ENCODE measurements at regions of chr15 and their contacts with region 1.

Region 1: GRCh38 chr15:68820295-68821189 is at the start of gene ANP32A:
- DNase-seq: peak; percentile 98
- ATAC-seq: peak; percentile 71
- H3K4me3 ChIP-seq: peak within 1 kb of the TSS; percentile 71 to 98 (median 94)
- H3K4me3 Mint-ChIP-seq: peak within 1 kb of the TSS; percentile 96
- H3K27ac ChIP-seq: peak within 1 kb of the TSS; percentile 90 to 93
- H3K27ac Mint-ChIP-seq: peak within 1 kb of the TSS; percentile 98
- H3K4me1 ChIP-seq: peaks cover 21 to 22% of the 10 kb centered on the region in 2 donors
- H3K4me1 Mint-ChIP-seq: peaks cover 27% of the 10 kb centered on the region
- H3K27me3 ChIP-seq: no peaks in the 10 kb centered on the region
- H3K27me3 Mint-ChIP-seq: no peaks in the 10 kb centered on the region
- CTCF ChIP-seq: no peak
- total RNA-seq, gene ANP32A: 153 and 163 TPM in 2 replicates

Region 2: GRCh38 chr15:68277603-68278344 is 542.8 kb before region 1 on chr15 and contains the start of gene FEM1B:
- CTCF ChIA-PET with region 1: no interaction called
- POLR2A ChIA-PET with region 1: interaction called, 5 read pairs
- intact Hi-C with region 1: loop called (anchors 5 kb)
- DNase-seq: peak; percentile 97
- ATAC-seq: peak; percentile 79
- H3K4me3 ChIP-seq: peak within 1 kb of the TSS; percentile 77 to 89 (median 79)
- H3K4me3 Mint-ChIP-seq: peak within 1 kb of the TSS; percentile 98
- H3K27ac ChIP-seq: peak within 1 kb of the TSS; percentile 96
- H3K27ac Mint-ChIP-seq: peak within 1 kb of the TSS; percentile 98
- H3K4me1 ChIP-seq: peaks cover 40% of the 10 kb centered on the region in 2 donors
- H3K4me1 Mint-ChIP-seq: peaks cover 57% of the 10 kb centered on the region
- H3K27me3 ChIP-seq: no peaks in the 10 kb centered on the region
- H3K27me3 Mint-ChIP-seq: no peaks in the 10 kb centered on the region
- CTCF ChIP-seq: no peak
- total RNA-seq, gene FEM1B: 52.4 and 54.4 TPM in 2 replicates

Region 3: GRCh38 chr15:68783226-68784058 is 37.1 kb before region 1 on chr15:
- CTCF ChIA-PET with region 1: interaction called, 14 read pairs
- POLR2A ChIA-PET with region 1: interaction called, 5 read pairs
- intact Hi-C with region 1: loop called (anchors 2 kb)
- DNase-seq: peak; percentile 74
- ATAC-seq: peak; percentile 84
- H3K4me3 ChIP-seq: no peak overlapping the region
- H3K4me3 Mint-ChIP-seq: no peak overlapping the region
- H3K27ac ChIP-seq: peak overlapping the region in 1 of 2 donors; percentile 10
- H3K27ac Mint-ChIP-seq: peak overlapping the region; percentile 50
- H3K4me1 ChIP-seq: peaks cover 30 to 32% of the 10 kb centered on the region in 2 donors
- H3K4me1 Mint-ChIP-seq: peaks cover 32% of the 10 kb centered on the region
- H3K27me3 ChIP-seq: no peaks in the 10 kb centered on the region
- H3K27me3 Mint-ChIP-seq: no peaks in the 10 kb centered on the region
- CTCF ChIP-seq: peak; percentile 82

Region 4: DNA sequence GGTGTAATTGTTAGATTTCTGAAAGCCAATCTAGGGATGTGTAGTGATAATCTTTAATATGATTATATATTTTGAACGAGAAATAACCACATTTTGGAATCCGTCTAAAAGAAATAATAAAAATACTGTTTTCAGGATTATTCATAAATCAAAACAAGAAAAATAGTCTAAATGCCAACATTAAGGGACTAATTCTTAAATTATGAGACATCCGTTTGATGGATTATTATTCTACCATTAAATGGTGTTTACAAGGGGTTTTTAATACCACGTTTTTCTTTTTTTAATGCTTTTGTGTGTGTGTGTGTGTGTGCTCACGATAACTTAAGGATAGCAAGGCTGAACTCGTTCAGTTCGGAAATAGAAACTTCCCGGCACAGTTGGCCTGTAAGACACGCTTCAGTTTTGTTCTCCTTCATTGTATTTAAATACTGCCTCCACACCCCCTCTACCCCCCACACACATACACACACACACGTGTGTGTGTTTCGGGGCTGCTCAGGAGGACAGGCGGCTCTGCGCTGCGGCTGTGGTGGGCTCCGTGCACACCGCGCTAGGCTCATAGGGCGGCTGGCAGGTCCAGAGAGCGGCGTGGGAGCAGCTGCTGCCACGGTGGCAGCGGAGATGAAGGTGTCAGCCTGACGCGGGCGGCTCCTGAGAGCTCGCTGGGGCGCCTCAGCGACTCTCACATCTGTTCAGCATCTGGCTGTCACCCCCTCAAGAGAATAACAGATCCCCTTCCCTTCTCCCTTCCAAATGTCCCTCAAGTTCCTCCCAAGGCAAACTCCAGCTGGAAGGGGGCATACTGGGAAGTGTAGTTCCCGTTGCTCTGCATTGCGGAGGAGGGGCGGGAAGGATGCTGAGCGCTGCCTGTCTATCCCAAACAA is 23.1 kb after region 1 on chr15:
- CTCF ChIA-PET with region 1: no interaction called
- POLR2A ChIA-PET with region 1: interaction called, 8 read pairs
- intact Hi-C with region 1: loop called (anchors 2 kb)
- DNase-seq: peak; percentile 62
- ATAC-seq: peak; percentile 56
- H3K4me3 ChIP-seq: peak overlapping the region in 4 of 5 experiments; percentile 9 to 52 (median 40)
- H3K4me3 Mint-ChIP-seq: peak overlapping the region; percentile 80
- H3K27ac ChIP-seq: no peak overlapping the region
- H3K27ac Mint-ChIP-seq: no peak overlapping the region
- H3K4me1 ChIP-seq: peaks cover 7 to 23% of the 10 kb centered on the region in 2 donors
- H3K4me1 Mint-ChIP-seq: peaks cover 15% of the 10 kb centered on the region
- H3K27me3 ChIP-seq: peaks cover 0 to 38% (median 29%) of the 10 kb centered on the region in 4 experiments
- H3K27me3 Mint-ChIP-seq: peaks cover 58% of the 10 kb centered on the region
- CTCF ChIP-seq: no peak

Region 5: GRCh38 chr15:69160141-69160993 is 339.8 kb after region 1 on chr15 and contains the start of gene GLCE:
- CTCF ChIA-PET with region 1: no interaction called
- POLR2A ChIA-PET with region 1: no interaction called
- intact Hi-C with region 1: loop called (anchors 5 kb)
- DNase-seq: peak; percentile 95
- ATAC-seq: peak; percentile 96
- H3K4me3 ChIP-seq: peak within 1 kb of the TSS; percentile 58 to 86 (median 76)
- H3K4me3 Mint-ChIP-seq: peak within 1 kb of the TSS; percentile 96
- H3K27ac ChIP-seq: peak within 1 kb of the TSS; percentile 8 to 70
- H3K27ac Mint-ChIP-seq: peak within 1 kb of the TSS; percentile 83
- H3K4me1 ChIP-seq: peaks cover 12 to 13% of the 10 kb centered on the region in 2 donors
- H3K4me1 Mint-ChIP-seq: peaks cover 16% of the 10 kb centered on the region
- H3K27me3 ChIP-seq: no peaks in the 10 kb centered on the region
- H3K27me3 Mint-ChIP-seq: peaks cover 12% of the 10 kb centered on the region
- CTCF ChIP-seq: no peak
- total RNA-seq, gene GLCE: 5.3 and 5.4 TPM in 2 replicates